ENCODE measurements at regions of chr5 and their contacts with region 1.

Region 1: GRCh38 chr5:146188358-146188757 is 5.9 kb upstream of the LARS1 start:
- DNase-seq: peak; percentile 92
- ATAC-seq: peak; percentile 87
- H3K4me3 ChIP-seq: peak overlapping the region; percentile 14; the same call in 1 of the 2 replicates
- H3K27ac ChIP-seq: peak overlapping the region; percentile 57
- H3K4me1 ChIP-seq: peaks cover 37% of the 10 kb centered on the region
- H3K27me3 ChIP-seq: no peaks in the 10 kb centered on the region
- CTCF ChIP-seq: no peak

Region 2: DNA sequence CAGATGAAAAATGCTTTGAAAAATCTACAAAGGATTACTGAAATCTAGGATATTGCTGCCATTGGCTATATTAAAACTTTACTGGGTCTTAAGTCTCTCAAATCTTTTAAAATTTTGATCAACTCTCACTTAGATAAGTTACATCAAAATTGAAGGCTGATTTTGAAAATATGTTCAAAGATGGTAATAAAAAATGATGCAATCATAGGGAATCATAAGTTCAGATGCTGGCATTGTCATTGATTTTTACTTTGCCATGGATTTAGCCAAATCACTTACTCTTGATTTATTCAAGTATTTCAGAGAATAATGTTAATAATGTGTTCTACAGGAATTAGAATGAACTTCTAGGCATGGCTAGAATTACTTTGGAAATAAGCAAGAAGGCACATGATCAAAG is 30.1 kb before region 1 on chr5:
- CTCF ChIA-PET with region 1: no interaction called
- POLR2A ChIA-PET with region 1: no interaction called
- intact Hi-C with region 1: no loop called
- DNase-seq: no peak
- ATAC-seq: no peak
- H3K4me3 ChIP-seq: no peak overlapping the region
- H3K27ac ChIP-seq: no peak overlapping the region
- H3K4me1 ChIP-seq: no peaks in the 10 kb centered on the region
- H3K27me3 ChIP-seq: no peaks in the 10 kb centered on the region
- CTCF ChIP-seq: no peak

Region 3: GRCh38 chr5:146203011-146203871 is 14.9 kb after region 1 on chr5 and contains the start of gene RBM27:
- CTCF ChIA-PET with region 1: no interaction called
- POLR2A ChIA-PET with region 1: no interaction called
- intact Hi-C with region 1: loop called (anchors 1 kb)
- DNase-seq: peak; percentile 99
- ATAC-seq: peak; percentile 99
- H3K4me3 ChIP-seq: peak within 1 kb of the TSS; percentile 76
- H3K27ac ChIP-seq: peak within 1 kb of the TSS; percentile 83
- H3K4me1 ChIP-seq: peaks cover 15% of the 10 kb centered on the region
- H3K27me3 ChIP-seq: no peaks in the 10 kb centered on the region
- CTCF ChIP-seq: no peak
- total RNA-seq, gene RBM27: 18.8 and 21.4 TPM in 2 replicates

Region 4: GRCh38 chr5:146283344-146283761 is 95.0 kb after region 1 on chr5:
- CTCF ChIA-PET with region 1: no interaction called
- POLR2A ChIA-PET with region 1: interaction called, 4 read pairs
- intact Hi-C with region 1: loop called (anchors 10 kb)
- DNase-seq: peak; percentile 97
- ATAC-seq: peak; percentile 89
- H3K4me3 ChIP-seq: peak overlapping the region; percentile 47; the same call in 1 of the 2 replicates
- H3K27ac ChIP-seq: peak overlapping the region; percentile 84
- H3K4me1 ChIP-seq: peaks cover 29% of the 10 kb centered on the region
- H3K27me3 ChIP-seq: no peaks in the 10 kb centered on the region
- CTCF ChIP-seq: no peak

Region 5: GRCh38 chr5:146426853-146427618 is 238.7 kb after region 1 on chr5:
- CTCF ChIA-PET with region 1: interaction called, 7 read pairs
- POLR2A ChIA-PET with region 1: no interaction called
- intact Hi-C with region 1: loop called (anchors 2 kb)
- DNase-seq: peak; percentile 79
- ATAC-seq: peak; percentile 77
- H3K4me3 ChIP-seq: no peak overlapping the region
- H3K27ac ChIP-seq: no peak overlapping the region
- H3K4me1 ChIP-seq: no peaks in the 10 kb centered on the region
- H3K27me3 ChIP-seq: no peaks in the 10 kb centered on the region
- CTCF ChIP-seq: peak; percentile 93

Region 6: DNA sequence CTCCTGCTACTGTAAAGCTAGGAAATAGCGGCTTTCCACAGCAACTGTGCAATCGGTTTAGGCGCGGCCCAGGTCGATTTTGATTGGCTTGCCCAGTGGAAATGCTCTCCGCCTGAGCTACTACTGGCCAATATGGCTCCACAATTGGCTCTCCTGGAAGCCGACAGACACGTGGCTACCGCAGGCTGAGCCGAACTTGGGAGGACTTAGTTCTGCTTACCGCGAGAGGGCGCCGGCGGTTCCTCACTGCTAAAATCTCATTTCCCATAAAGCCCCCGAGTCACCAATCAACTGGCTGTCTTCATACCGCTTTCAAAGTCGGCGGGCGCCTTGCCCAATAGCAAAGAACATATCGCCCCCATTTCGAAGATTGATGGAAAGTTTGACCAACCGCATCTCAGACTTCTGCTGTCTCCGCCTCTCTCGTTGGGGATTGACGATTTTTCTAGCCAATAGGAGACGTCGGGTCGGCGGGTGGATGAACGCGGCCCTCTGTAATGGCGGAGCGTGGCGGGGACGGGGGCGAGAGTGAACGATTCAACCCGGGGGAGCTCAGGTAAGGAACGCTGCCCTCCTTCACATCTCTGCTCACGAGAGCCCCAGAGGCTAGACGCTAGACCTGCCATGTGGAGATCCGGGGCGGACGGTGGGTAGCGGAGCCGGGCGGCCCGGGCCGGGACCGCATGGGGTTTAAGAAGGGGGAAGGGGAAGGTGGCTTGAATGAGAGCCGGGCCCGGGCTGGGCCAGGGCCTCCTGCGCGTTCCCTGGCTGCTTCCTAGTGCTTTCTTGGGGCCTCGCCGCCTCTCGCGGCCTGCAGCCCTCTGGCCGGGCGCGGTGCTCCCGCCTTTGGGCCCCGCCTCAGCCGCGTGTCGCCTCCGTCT is 258.7 kb after region 1 on chr5 and contains the start of gene TCERG1:
- CTCF ChIA-PET with region 1: no interaction called
- POLR2A ChIA-PET with region 1: interaction called, 3 read pairs
- intact Hi-C with region 1: loop called (anchors 2 kb)
- DNase-seq: peak; percentile 100
- ATAC-seq: peak; percentile 91
- H3K4me3 ChIP-seq: peak within 1 kb of the TSS; percentile 77
- H3K27ac ChIP-seq: peak within 1 kb of the TSS; percentile 77
- H3K4me1 ChIP-seq: peaks cover 33% of the 10 kb centered on the region
- H3K27me3 ChIP-seq: no peaks in the 10 kb centered on the region
- CTCF ChIP-seq: peak; percentile 93
- total RNA-seq, gene TCERG1: 86.0 and 96.9 TPM in 2 replicates

Region 7: GRCh38 chr5:146457431-146457830 is 269.1 kb after region 1 on chr5:
- CTCF ChIA-PET with region 1: no interaction called
- POLR2A ChIA-PET with region 1: no interaction called
- intact Hi-C with region 1: no loop called
- DNase-seq: no peak
- ATAC-seq: no peak
- H3K4me3 ChIP-seq: no peak overlapping the region
- H3K27ac ChIP-seq: no peak overlapping the region
- H3K4me1 ChIP-seq: peaks cover 12% of the 10 kb centered on the region
- H3K27me3 ChIP-seq: no peaks in the 10 kb centered on the region
- CTCF ChIP-seq: no peak

Region 8: DNA sequence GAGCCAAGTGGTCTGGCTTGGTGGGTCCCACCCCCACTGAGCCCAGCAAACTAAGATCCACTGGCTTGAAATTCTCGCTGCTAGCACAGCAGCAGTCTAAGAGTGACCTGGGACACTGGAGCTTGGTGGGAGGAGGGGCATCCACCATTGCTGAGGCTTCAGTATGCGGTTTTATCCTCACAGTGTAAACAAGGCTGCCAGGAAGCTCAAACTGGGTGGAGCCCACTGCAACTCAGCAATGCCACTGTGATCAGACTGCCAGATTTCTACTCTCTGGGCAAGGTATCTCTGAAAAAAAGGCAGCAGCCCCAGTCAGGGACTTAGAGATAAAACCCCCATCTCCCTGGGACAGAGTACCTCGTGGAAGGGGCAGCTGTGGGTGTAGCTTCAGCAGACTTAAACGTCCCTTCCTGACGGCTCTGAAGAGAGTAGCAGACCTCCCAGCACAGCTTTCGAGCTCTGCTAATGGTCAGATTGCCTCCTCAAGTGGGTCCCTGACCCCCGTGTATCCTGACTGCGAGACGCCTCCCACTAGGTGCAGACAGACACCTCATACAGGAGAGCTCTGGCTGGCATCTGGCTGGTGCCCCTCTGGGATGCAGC is 1028.3 kb after region 1 on chr5:
- CTCF ChIA-PET with region 1: no interaction called
- POLR2A ChIA-PET with region 1: no interaction called
- intact Hi-C with region 1: loop called (anchors 10 kb)
- DNase-seq: peak; percentile 66
- ATAC-seq: peak; percentile 100
- H3K4me3 ChIP-seq: no peak overlapping the region
- H3K27ac ChIP-seq: no peak overlapping the region
- H3K4me1 ChIP-seq: peaks cover 5% of the 10 kb centered on the region
- H3K27me3 ChIP-seq: 0 out of 2 replicates have a peak, but pooled peaks cover under 1% of the 10 kb centered on the region
- CTCF ChIP-seq: no peak

Measured in PC-3 (cell line).